ENCODE measurements at regions of chr1 and their contacts with region 1.

Region 1: GRCh38 chr1:32321712-32322291 is 14.2 kb downstream of the MARCKSL1 start:
- DNase-seq: peak in 7 of 9 donors; percentile 37 to 73 (median 57)
- ATAC-seq: peak; percentile 90
- H3K4me3 ChIP-seq: peak overlapping the region; percentile 33
- H3K4me3 Mint-ChIP-seq: peak overlapping the region; percentile 58 to 85 (median 74)
- H3K27ac ChIP-seq: peak overlapping the region; percentile 58
- H3K27ac Mint-ChIP-seq: peak overlapping the region; percentile 62 to 96 (median 94)
- H3K4me1 ChIP-seq: peaks cover 33 to 46% of the 10 kb centered on the region in 2 donors
- H3K4me1 Mint-ChIP-seq: peaks cover 27 to 69% (median 47%) of the 10 kb centered on the region in 7 donors
- H3K27me3 ChIP-seq: no peaks in the 10 kb centered on the region
- H3K27me3 Mint-ChIP-seq: no peaks in the 10 kb centered on the region

Region 2: DNA sequence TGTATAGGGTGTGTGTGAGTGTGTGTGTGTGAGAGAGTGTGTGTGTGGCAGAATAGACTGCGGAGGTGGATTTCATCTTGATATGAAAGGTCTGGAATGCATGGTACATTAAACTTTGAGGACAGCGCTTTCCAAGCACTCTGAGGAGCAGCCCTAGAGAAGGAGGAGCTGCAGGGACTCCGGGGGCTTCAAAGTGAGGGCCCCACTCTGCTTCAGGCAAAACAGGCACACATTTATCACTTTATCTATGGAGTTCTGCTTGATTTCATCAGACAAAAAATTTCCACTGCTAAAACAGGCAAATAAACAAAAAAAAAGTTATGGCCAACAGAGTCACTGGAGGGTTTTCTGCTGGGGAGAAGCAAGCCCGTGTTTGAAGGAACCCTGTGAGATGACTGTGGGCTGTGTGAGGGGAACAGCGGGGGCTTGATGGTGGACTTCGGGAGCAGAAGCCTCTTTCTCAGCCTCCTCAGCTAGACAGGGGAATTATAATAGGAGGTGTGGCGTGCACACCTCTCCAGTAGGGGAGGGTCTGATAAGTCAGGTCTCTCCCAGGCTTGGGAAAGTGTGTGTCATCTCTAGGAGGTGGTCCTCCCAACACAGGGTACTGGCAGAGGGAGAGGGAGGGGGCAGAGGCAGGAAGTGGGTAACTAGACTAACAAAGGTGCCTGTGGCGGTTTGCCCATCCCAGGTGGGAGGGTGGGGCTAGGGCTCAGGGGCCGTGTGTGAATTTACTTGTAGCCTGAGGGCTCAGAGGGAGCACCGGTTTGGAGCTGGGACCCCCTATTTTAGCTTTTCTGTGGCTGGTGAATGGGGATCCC is 48.2 kb before region 1 on chr1:
- CTCF ChIA-PET with region 1: interaction called, 5 read pairs
- POLR2A ChIA-PET with region 1: interaction called, 14 read pairs
- intact Hi-C with region 1: no loop called
- DNase-seq: peak; percentile 34 to 96 (median 88)
- ATAC-seq: peak; percentile 94
- H3K4me3 ChIP-seq: peak overlapping the region; percentile 49
- H3K4me3 Mint-ChIP-seq: peak overlapping the region; percentile 74 to 91 (median 88)
- H3K27ac ChIP-seq: peak overlapping the region; percentile 79
- H3K27ac Mint-ChIP-seq: peak overlapping the region; percentile 77 to 99 (median 97)
- H3K4me1 ChIP-seq: peaks cover 42 to 69% of the 10 kb centered on the region in 2 donors
- H3K4me1 Mint-ChIP-seq: peaks cover 45 to 86% (median 62%) of the 10 kb centered on the region in 7 donors
- H3K27me3 ChIP-seq: no peaks in the 10 kb centered on the region
- H3K27me3 Mint-ChIP-seq: no peaks in the 10 kb centered on the region

Region 3: GRCh38 chr1:32361674-32362473 is 40.1 kb after region 1 on chr1:
- CTCF ChIA-PET with region 1: interaction called, 4 read pairs
- POLR2A ChIA-PET with region 1: interaction called, 10 read pairs
- intact Hi-C with region 1: no loop called
- DNase-seq: peak in 2 of 9 donors; percentile 18 to 38
- ATAC-seq: peak; percentile 62
- H3K4me3 ChIP-seq: no peak overlapping the region
- H3K4me3 Mint-ChIP-seq: peak overlapping the region; percentile 2 to 80 (median 63)
- H3K27ac ChIP-seq: peak overlapping the region; percentile 43
- H3K27ac Mint-ChIP-seq: peak overlapping the region in 2 of 9 donors; percentile 42 to 50
- H3K4me1 ChIP-seq: peaks cover 7 to 8% of the 10 kb centered on the region in 2 donors
- H3K4me1 Mint-ChIP-seq: peaks cover 21 to 39% (median 27%) of the 10 kb centered on the region in 7 donors
- H3K27me3 ChIP-seq: no peaks in the 10 kb centered on the region
- H3K27me3 Mint-ChIP-seq: peaks cover 0 to 10% (median 5%) of the 10 kb centered on the region in 5 donors

Region 4: DNA sequence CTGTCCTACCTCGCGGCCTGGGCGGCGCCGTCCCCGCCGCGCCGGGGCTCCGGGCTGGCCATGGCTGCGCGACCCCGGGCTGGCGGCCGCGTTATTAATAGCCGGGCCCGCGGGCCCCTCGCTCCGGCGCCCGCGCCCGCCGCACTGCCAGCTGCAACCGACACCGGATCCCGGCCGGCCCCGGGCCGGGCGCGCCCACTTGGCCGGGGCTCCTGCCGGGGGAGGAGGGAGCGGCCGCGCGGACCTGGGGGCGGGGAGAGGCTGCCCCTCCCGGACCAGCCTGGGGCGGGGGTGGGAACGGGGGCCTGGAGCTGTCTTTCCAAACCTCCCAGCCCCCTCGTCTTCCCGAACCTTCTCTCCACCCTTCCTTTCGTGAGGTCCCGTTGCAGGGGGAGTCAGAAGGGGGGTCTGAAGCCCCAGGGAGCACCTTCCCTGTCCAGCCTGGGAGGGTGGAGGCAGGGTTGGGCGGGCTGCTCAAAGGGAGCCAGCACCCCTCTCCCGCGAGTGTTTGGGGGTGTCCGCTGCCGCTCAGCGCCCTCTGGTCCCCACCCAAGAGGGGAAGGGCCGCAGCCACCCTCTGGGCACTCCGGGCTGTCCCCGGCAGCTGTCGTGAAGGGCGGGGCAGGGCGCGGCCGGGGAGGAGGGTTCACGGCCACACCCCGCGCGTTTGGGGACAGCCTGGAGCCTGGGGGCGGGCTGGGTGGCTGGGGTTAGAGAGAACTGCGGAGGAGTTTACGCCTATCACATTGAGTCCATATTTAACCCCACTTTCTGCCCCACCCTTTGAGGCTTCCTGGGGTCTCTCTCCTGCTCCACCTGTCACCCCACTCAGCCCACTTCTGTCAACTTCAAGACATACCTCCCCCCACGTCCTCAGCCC is 381.0 kb after region 1 on chr1 and contains the start of gene SYNC:
- CTCF ChIA-PET with region 1: no interaction called
- POLR2A ChIA-PET with region 1: no interaction called
- intact Hi-C with region 1: no loop called
- DNase-seq: peak in 2 of 9 donors; percentile 11 to 33
- ATAC-seq: peak; percentile 63
- H3K4me3 ChIP-seq: no peak within 1 kb of the TSS
- H3K4me3 Mint-ChIP-seq: peak within 1 kb of the TSS; percentile 48 to 83 (median 63)
- H3K27ac ChIP-seq: no peak within 1 kb of the TSS
- H3K27ac Mint-ChIP-seq: peak within 1 kb of the TSS in 1 of 9 donors; percentile 42
- H3K4me1 ChIP-seq: peaks cover 3 to 8% of the 10 kb centered on the region in 2 donors
- H3K4me1 Mint-ChIP-seq: peaks cover 7 to 14% (median 9%) of the 10 kb centered on the region in 7 donors
- H3K27me3 ChIP-seq: peaks cover 0 to 3% of the 10 kb centered on the region in 2 donors
- H3K27me3 Mint-ChIP-seq: peaks cover 44 to 53% (median 47%) of the 10 kb centered on the region in 5 donors
- total RNA-seq, gene SYNC: not detected

Measured in naive thymus-derived CD4-positive, alpha-beta T cell (primary cell).